Thyroid gland (tissue), 4 donors: ENCODE measurements at regions of chr9 and their contacts with region 1.

Region 1: GRCh38 chr9:104927912-104928740 is at the start of gene ABCA1:
- DNase-seq: peak; percentile 95
- H3K4me3 ChIP-seq: peak within 1 kb of the TSS; percentile 36 to 89 (median 58)
- H3K27ac ChIP-seq: peak within 1 kb of the TSS; percentile 74 to 90 (median 77)
- H3K4me1 ChIP-seq: peaks cover 23 to 25% of the 10 kb centered on the region in 2 donors
- H3K27me3 ChIP-seq: no peaks in the 10 kb centered on the region
- CTCF ChIP-seq: no peak
- POLR2A ChIP-seq: peak; percentile 3 to 75
- total RNA-seq, gene ABCA1: 18.3 to 59.8 (median 35.0) TPM

Region 2: GRCh38 chr9:104301755-104302154 is 626.4 kb before region 1 on chr9:
- intact Hi-C with region 1: no loop called
- DNase-seq: no peak
- H3K4me3 ChIP-seq: no peak overlapping the region
- H3K27ac ChIP-seq: no peak overlapping the region
- H3K4me1 ChIP-seq: peaks cover 0 to 3% of the 10 kb centered on the region in 2 donors
- H3K27me3 ChIP-seq: no peaks in the 10 kb centered on the region
- CTCF ChIP-seq: no peak
- POLR2A ChIP-seq: no peak

Region 3: DNA sequence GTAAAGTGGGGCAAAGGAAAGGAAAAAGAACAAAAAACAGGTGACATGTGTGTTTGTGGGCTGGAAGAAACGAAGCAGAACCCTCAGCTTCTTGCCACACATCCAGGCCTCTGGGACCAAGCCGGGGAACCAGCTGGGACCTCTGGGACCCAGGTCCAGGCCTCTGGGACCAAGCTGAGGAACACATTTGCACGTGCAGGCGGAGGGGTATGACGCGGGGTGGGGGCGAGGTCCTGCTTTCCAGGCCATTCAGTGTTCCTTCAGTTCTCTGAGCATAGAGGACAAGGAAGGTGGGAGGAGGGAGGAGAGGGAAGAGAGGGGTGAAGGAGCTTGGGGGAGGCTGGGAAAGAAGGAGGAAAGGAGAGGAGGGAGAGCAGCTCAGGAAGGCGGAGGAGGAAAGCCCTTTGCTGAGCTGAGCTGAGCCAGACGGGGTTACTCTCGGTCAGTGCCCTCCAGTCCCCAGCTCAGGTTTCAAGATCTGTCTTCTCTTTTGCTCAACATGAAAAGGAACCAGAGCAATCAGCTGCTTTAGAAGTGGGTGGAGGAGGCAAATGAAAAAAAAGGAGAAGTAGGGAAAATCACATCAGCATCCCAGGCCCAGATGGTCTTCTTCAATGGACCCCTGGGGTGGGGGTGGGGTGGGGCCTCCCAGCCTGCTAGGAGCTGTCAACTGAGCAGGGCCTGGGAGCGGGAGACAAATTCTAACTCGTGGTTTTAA is 59.3 kb before region 1 on chr9:
- intact Hi-C with region 1: loop called (anchors 5 kb)
- DNase-seq: peak; percentile 84 to 86
- H3K4me3 ChIP-seq: no peak overlapping the region
- H3K27ac ChIP-seq: peak overlapping the region; percentile 81 to 88 (median 83)
- H3K4me1 ChIP-seq: peaks cover 31 to 55% of the 10 kb centered on the region in 2 donors
- H3K27me3 ChIP-seq: no peaks in the 10 kb centered on the region
- CTCF ChIP-seq: no peak
- POLR2A ChIP-seq: no peak

Region 4: GRCh38 chr9:104968025-104968982 is 40.2 kb after region 1 on chr9:
- intact Hi-C with region 1: loop called (anchors 5 kb)
- DNase-seq: peak; percentile 87 to 88
- H3K4me3 ChIP-seq: peak overlapping the region; percentile 65 to 87 (median 65)
- H3K27ac ChIP-seq: peak overlapping the region; percentile 76 to 94 (median 92)
- H3K4me1 ChIP-seq: peaks cover 0 to 9% of the 10 kb centered on the region in 2 donors
- H3K27me3 ChIP-seq: no peaks in the 10 kb centered on the region
- CTCF ChIP-seq: no peak
- POLR2A ChIP-seq: peak in 1 of 2 donors; percentile 29

Region 5: GRCh38 chr9:104991144-104991953 is 63.2 kb after region 1 on chr9:
- intact Hi-C with region 1: loop called (anchors 10 kb)
- DNase-seq: peak; percentile 89 to 90
- H3K4me3 ChIP-seq: peak overlapping the region in 2 of 3 donors; percentile 33 to 39
- H3K27ac ChIP-seq: peak overlapping the region; percentile 78 to 98 (median 92)
- H3K4me1 ChIP-seq: peaks cover 36 to 37% of the 10 kb centered on the region in 2 donors
- H3K27me3 ChIP-seq: no peaks in the 10 kb centered on the region
- CTCF ChIP-seq: no peak
- POLR2A ChIP-seq: peak in 1 of 2 donors; percentile 58

Region 6: DNA sequence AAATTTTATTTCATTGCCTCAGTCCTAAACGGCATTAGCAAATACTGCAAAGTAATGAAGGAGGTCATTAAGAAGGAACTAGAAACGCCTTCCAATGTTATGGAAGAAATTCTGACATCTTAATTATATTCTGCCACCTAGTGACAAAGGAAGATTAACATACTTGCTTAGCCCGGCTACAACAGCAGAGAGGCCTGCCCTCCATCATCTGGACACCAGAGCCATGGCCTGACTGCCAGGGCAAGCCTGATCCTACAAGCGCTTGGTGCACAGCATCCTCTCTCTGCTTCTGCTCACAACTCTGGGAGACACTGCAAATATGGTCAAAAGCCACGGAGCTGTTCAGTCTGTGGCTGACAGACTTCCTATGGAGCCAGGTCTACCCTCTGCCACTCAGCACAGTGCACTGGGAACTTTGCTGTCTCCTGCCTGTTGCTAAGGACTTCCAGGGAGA is 229.0 kb after region 1 on chr9:
- intact Hi-C with region 1: loop called (anchors 10 kb)
- DNase-seq: peak; percentile 18 to 41
- H3K4me3 ChIP-seq: no peak overlapping the region
- H3K27ac ChIP-seq: no peak overlapping the region
- H3K4me1 ChIP-seq: no peaks in the 10 kb centered on the region
- H3K27me3 ChIP-seq: no peaks in the 10 kb centered on the region
- CTCF ChIP-seq: peak in 4 of 6 experiments; percentile 45 to 62 (median 53)
- POLR2A ChIP-seq: no peak